ENCODE measurements at regions of chr1 and their contacts with region 1.

Region 1: DNA sequence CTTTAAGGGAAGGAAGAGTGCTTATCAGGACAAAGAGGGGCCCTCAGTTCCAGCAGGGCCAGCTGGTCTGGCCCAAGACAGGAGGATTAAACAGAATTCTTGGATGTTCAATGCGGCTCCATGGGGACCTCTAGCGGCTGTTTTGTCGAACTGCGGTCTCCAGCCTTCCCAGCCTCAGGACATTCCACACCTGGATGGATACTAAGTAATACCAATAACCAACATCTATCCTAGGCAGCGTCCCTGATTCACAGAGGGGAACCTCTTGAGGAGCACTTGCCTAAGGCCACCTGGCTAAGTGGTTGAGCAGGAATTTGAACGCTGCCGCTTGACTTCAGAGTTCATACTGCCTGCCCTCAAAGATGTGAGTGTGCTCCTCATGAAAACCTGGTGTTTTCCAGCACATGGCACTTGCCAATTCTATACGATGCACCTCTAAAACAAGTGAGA is 15.5 kb upstream of the CD247 start:
- DNase-seq: peak; percentile 73
- ATAC-seq: peak; percentile 68
- H3K4me3 ChIP-seq: no peak overlapping the region
- H3K4me3 Mint-ChIP-seq: no peak overlapping the region
- H3K27ac ChIP-seq: no peak overlapping the region
- H3K27ac Mint-ChIP-seq: no peak overlapping the region
- H3K4me1 ChIP-seq: no peaks in the 10 kb centered on the region
- H3K4me1 Mint-ChIP-seq: peaks cover 5% of the 10 kb centered on the region
- H3K27me3 ChIP-seq: peaks cover 0 to 4% (median 0%) of the 10 kb centered on the region in 4 experiments
- H3K27me3 Mint-ChIP-seq: no peaks in the 10 kb centered on the region
- CTCF ChIP-seq: peak; percentile 94

Region 2: GRCh38 chr1:167066333-167067122 is 467.3 kb before region 1 on chr1:
- CTCF ChIA-PET with region 1: interaction called, 32 read pairs
- POLR2A ChIA-PET with region 1: no interaction called
- intact Hi-C with region 1: loop called (anchors 1 kb)
- DNase-seq: peak; percentile 83
- ATAC-seq: peak; percentile 99
- H3K4me3 ChIP-seq: peak overlapping the region in 1 of 5 experiments; percentile 20
- H3K4me3 Mint-ChIP-seq: no peak overlapping the region
- H3K27ac ChIP-seq: no peak overlapping the region
- H3K27ac Mint-ChIP-seq: no peak overlapping the region
- H3K4me1 ChIP-seq: peaks cover 0 to 7% of the 10 kb centered on the region in 2 donors
- H3K4me1 Mint-ChIP-seq: peaks cover 4% of the 10 kb centered on the region
- H3K27me3 ChIP-seq: no peaks in the 10 kb centered on the region
- H3K27me3 Mint-ChIP-seq: no peaks in the 10 kb centered on the region
- CTCF ChIP-seq: peak; percentile 98

Region 3: DNA sequence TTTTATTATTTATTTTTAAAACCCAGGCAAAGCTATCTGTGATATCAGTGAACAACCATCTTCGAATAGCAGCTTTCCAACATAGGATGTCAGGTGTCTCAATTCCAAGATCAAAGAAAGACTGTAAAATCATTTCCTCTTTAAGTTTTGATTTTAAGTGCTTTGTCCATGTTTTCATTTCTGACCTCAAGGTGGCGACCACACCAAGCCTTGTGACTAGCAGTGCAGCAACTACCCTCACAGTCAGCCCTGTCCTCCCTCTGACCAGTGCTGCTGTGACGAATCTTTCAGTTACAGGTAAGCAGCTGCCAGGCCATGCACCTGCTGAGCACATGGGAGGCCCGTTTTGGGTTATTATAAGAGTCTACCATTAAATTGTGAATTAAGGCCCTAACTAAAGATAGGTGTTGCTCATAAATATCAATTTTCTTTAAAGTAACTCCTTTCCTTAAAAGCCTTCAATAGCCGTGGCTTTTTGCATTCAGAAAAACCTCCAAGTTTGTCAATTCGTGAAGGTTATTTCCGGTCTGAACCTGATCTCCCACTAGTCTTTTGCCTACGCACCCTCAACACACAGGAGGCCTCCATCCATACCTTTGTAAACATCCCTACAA is 132.5 kb before region 1 on chr1:
- CTCF ChIA-PET with region 1: interaction called, 68 read pairs
- POLR2A ChIA-PET with region 1: no interaction called
- intact Hi-C with region 1: loop called (anchors 1 kb)
- DNase-seq: peak; percentile 70
- ATAC-seq: peak; percentile 76
- H3K4me3 ChIP-seq: no peak overlapping the region
- H3K4me3 Mint-ChIP-seq: no peak overlapping the region
- H3K27ac ChIP-seq: no peak overlapping the region
- H3K27ac Mint-ChIP-seq: peak overlapping the region; percentile 18
- H3K4me1 ChIP-seq: no peaks in the 10 kb centered on the region
- H3K4me1 Mint-ChIP-seq: no peaks in the 10 kb centered on the region
- H3K27me3 ChIP-seq: no peaks in the 10 kb centered on the region
- H3K27me3 Mint-ChIP-seq: no peaks in the 10 kb centered on the region
- CTCF ChIP-seq: peak; percentile 82

Region 4: DNA sequence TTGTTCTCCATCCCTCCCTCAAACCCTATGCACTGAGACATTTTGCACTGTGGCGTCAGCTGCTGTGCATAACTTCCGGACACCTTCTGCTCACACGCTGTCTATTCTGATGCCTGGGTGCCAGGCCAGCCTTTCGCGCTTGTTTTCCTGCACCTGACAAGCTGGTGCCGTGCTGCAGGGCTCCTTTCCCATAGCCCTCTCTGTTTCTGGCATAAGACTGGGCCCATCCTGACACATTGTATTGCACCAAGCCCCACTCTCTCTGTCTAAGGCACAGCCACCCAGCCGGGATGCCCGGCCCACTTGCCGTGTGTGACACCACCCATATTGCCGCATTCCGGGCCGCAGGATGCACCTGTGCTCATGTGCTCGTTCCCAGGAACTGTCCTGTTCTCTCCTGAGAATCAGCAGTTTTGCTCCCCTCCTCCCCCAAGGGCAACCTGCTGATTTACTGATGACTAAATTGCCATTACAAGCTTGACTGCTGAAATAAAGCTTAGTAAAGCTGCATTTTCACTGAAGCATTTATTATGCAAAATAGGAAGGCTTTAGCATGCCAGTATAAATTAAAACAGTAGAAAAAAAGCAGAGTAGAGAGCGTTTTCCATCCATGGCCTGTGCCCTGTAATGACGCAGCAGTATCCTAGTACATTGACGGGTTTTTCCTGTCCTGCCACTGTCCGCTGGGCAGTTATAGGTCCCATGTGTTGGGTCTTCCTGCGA is 103.6 kb before region 1 on chr1:
- CTCF ChIA-PET with region 1: interaction called, 21 read pairs
- POLR2A ChIA-PET with region 1: no interaction called
- intact Hi-C with region 1: no loop called
- DNase-seq: peak; percentile 57
- ATAC-seq: peak; percentile 40
- H3K4me3 ChIP-seq: peak overlapping the region in 2 of 5 experiments; percentile 16 to 25
- H3K4me3 Mint-ChIP-seq: peak overlapping the region; percentile 84
- H3K27ac ChIP-seq: peak overlapping the region; percentile 71
- H3K27ac Mint-ChIP-seq: peak overlapping the region; percentile 97
- H3K4me1 ChIP-seq: peaks cover 37 to 54% of the 10 kb centered on the region in 2 donors
- H3K4me1 Mint-ChIP-seq: peaks cover 50% of the 10 kb centered on the region
- H3K27me3 ChIP-seq: peaks cover 0 to under 1% (median under 1%) of the 10 kb centered on the region in 4 experiments
- H3K27me3 Mint-ChIP-seq: no peaks in the 10 kb centered on the region
- CTCF ChIP-seq: no peak

Region 5: GRCh38 chr1:167454894-167455785 is 78.7 kb before region 1 on chr1:
- CTCF ChIA-PET with region 1: interaction called, 18 read pairs
- POLR2A ChIA-PET with region 1: no interaction called
- intact Hi-C with region 1: no loop called
- DNase-seq: peak; percentile 78
- ATAC-seq: peak; percentile 78
- H3K4me3 ChIP-seq: peak overlapping the region; percentile 50 to 82 (median 77)
- H3K4me3 Mint-ChIP-seq: peak overlapping the region; percentile 79
- H3K27ac ChIP-seq: peak overlapping the region in 1 of 2 donors; percentile 66
- H3K27ac Mint-ChIP-seq: no peak overlapping the region
- H3K4me1 ChIP-seq: peaks cover 3 to 23% of the 10 kb centered on the region in 2 donors
- H3K4me1 Mint-ChIP-seq: peaks cover 14% of the 10 kb centered on the region
- H3K27me3 ChIP-seq: peaks cover 0 to 6% (median 0%) of the 10 kb centered on the region in 4 experiments
- H3K27me3 Mint-ChIP-seq: peaks cover 4% of the 10 kb centered on the region
- CTCF ChIP-seq: no peak

Region 6: GRCh38 chr1:167479331-167479979 is 54.4 kb before region 1 on chr1:
- CTCF ChIA-PET with region 1: no interaction called
- POLR2A ChIA-PET with region 1: no interaction called
- intact Hi-C with region 1: no loop called
- DNase-seq: no peak
- ATAC-seq: no peak
- H3K4me3 ChIP-seq: no peak overlapping the region
- H3K4me3 Mint-ChIP-seq: no peak overlapping the region
- H3K27ac ChIP-seq: no peak overlapping the region
- H3K27ac Mint-ChIP-seq: no peak overlapping the region
- H3K4me1 ChIP-seq: no peaks in the 10 kb centered on the region
- H3K4me1 Mint-ChIP-seq: no peaks in the 10 kb centered on the region
- H3K27me3 ChIP-seq: peaks cover 0 to 15% (median 0%) of the 10 kb centered on the region in 4 experiments
- H3K27me3 Mint-ChIP-seq: peaks cover 20% of the 10 kb centered on the region
- CTCF ChIP-seq: no peak